ENCODE measurements at regions of chr2 and their contacts with region 1.

Region 1: GRCh38 chr2:121076885-121077549 is 208.0 kb downstream of the TFCP2L1 start:
- DNase-seq: peak; percentile 71
- ATAC-seq: peak; percentile 38 to 52

Region 2: DNA sequence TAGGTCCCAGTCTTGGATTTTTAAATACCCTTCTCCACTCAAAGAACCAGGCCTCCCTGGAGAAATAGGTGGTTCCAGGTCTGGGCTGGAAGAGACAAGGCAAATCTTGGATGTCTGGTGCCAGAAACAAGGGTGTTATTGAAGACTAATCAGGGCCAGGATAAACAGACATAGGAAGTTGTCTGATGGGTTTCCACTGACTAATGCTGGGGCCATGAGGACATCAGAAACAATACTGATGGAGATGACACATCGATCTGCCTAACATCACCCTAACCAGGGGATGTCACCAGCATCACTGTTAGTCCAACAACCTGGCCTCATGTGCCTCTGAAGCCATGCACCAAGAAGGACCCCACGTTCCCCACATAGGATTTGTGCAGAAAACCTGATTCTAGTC is 383.9 kb before region 1 on chr2:
- intact Hi-C with region 1: loop called (anchors 1 to 2 kb)
- DNase-seq: no peak
- ATAC-seq: no peak

Region 3: DNA sequence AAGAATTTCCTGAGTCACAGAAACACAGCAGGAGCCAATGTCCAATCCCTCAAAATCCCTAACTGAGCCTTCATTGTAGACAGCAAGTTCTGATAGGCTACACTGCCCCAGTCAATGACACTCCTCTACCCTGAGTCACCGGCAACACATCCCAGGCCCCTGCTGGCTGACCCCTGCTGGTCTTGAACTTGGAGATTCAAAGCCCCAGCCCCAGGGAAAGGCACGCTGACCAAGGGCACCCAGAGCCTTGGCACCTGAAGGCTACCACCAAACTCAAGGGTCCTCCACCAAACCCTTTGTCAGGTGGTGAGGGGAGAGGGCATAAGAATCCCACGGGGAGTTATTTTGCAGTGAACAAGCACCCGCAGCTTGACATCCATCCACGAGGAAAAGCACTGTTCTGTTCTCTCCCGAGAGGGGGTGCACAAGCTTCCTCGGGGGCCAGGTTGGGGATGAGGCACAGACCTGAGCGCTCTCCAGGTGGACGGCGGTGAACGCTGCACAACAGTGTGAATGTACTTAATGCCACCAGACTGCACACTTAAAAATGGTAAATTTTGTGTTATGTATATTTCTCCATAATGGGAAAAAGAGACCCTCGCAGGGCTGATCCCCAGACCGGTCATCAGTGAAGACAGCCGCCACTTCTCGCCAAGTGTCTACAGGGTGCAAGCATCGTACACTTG is 161.1 kb after region 1 on chr2:
- intact Hi-C with region 1: no loop called
- DNase-seq: no peak
- ATAC-seq: peak in 1 of 2 donors; percentile 31